T-cell (primary cell): ENCODE measurements at regions of chr2 and their contacts with region 1.

Region 1: DNA sequence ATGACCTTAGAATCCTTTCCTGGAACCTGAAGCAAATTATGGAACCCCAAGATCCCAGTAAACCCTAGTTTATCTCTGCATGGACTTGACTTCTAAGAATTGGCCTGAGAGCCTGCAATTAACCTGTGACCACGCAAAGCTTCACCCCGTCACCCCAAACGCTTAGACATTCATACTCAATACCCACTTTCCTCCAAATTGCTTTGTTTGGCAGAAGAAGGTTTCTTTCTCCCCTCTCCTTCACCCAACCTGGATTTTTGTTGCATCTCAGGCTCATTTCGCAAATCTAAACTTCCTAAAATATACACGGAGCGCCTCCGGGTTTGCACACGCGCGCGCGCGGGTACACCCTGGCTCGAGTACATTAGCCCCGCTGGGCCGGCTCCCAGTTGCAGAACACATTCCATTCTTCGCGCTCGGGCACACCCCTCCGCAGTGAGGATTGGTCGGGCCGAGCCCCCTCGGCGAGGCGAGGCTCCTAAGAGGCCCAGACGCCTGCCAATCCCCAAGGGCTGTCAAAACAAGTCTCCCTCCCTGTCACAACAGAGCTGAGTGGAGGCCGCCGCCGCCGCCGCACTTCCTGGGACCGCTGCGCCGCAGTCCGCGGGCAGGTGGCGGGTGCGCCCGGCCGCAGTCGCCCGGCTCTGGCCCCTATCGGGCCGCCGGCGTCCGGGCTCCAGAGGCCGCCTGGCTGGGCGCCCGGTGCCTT is at the start of gene PLCL1:
- DNase-seq: peak; percentile 82 to 94 (median 90)
- ATAC-seq: peak; percentile 97 to 99 (median 98)
- H3K4me3 ChIP-seq: peak within 1 kb of the TSS; percentile 82 to 86
- H3K4me3 Mint-ChIP-seq: peak within 1 kb of the TSS; percentile 87 to 91 (median 90)
- H3K27ac ChIP-seq: peak within 1 kb of the TSS; percentile 39
- H3K27ac Mint-ChIP-seq: peak within 1 kb of the TSS; percentile 88 to 89
- H3K4me1 ChIP-seq: peaks cover 18 to 20% of the 10 kb centered on the region in 2 experiments
- H3K4me1 Mint-ChIP-seq: peaks cover 46 to 50% (median 49%) of the 10 kb centered on the region in 3 donors
- H3K27me3 ChIP-seq: no peaks in the 10 kb centered on the region
- H3K27me3 Mint-ChIP-seq: peaks cover 0 to 4% of the 10 kb centered on the region in 2 donors
- total RNA-seq, gene PLCL1: 15.3 to 24.7 (median 20.3) TPM

Region 2: DNA sequence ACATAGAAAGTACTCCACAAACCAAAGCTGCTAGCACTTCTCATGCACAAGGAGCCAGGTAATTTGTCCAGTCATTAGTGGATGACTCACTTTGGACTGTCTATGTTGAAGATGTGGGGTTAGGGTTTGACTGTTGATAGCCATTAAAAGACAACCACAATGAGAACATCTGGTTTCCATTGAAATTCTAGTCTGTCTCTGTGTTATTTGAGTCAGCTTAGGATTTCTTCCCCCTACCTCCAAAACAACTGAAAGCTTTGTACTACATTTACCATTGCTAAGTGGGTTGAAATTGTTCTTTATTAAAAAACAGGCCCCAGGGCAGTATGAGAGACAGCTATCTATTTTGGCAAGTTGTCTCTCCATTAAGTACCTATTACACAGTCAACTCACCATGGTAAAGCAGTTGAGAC is 443.5 kb before region 1 on chr2:
- CTCF ChIA-PET with region 1: no interaction called
- POLR2A ChIA-PET with region 1: no interaction called
- DNase-seq: no peak
- ATAC-seq: no peak
- H3K4me3 ChIP-seq: no peak overlapping the region
- H3K4me3 Mint-ChIP-seq: no peak overlapping the region
- H3K27ac ChIP-seq: no peak overlapping the region
- H3K27ac Mint-ChIP-seq: no peak overlapping the region
- H3K4me1 ChIP-seq: peaks cover 3 to 4% of the 10 kb centered on the region in 2 experiments
- H3K4me1 Mint-ChIP-seq: peaks cover 23 to 25% (median 24%) of the 10 kb centered on the region in 3 donors
- H3K27me3 ChIP-seq: no peaks in the 10 kb centered on the region
- H3K27me3 Mint-ChIP-seq: no peaks in the 10 kb centered on the region

Region 3: GRCh38 chr2:197613509-197614042 is 190.6 kb before region 1 on chr2:
- CTCF ChIA-PET with region 1: no interaction called
- POLR2A ChIA-PET with region 1: interaction called in 1 of 2 experiments, 10 read pairs
- DNase-seq: no peak
- ATAC-seq: no peak
- H3K4me3 ChIP-seq: no peak overlapping the region
- H3K4me3 Mint-ChIP-seq: no peak overlapping the region
- H3K27ac ChIP-seq: no peak overlapping the region
- H3K27ac Mint-ChIP-seq: no peak overlapping the region
- H3K4me1 ChIP-seq: peaks cover 0 to 4% of the 10 kb centered on the region in 2 experiments
- H3K4me1 Mint-ChIP-seq: peaks cover 12 to 14% (median 13%) of the 10 kb centered on the region in 3 donors
- H3K27me3 ChIP-seq: peaks cover 0 to 5% of the 10 kb centered on the region in 2 experiments
- H3K27me3 Mint-ChIP-seq: no peaks in the 10 kb centered on the region

Region 4: GRCh38 chr2:197838036-197838435 is 33.8 kb after region 1 on chr2:
- CTCF ChIA-PET with region 1: interaction called in 1 of 2 experiments, 14 read pairs
- POLR2A ChIA-PET with region 1: interaction called, 3 to 4 read pairs
- DNase-seq: peak in 10 of 35 experiments; percentile 0 to 63 (median 8)
- ATAC-seq: peak; percentile 84 to 92 (median 86)
- H3K4me3 ChIP-seq: peak overlapping the region in 1 of 2 donors; percentile 17
- H3K4me3 Mint-ChIP-seq: peak overlapping the region; percentile 65 to 69 (median 65)
- H3K27ac ChIP-seq: peak overlapping the region; percentile 83
- H3K27ac Mint-ChIP-seq: peak overlapping the region; percentile 91 to 92
- H3K4me1 ChIP-seq: peaks cover 14 to 33% of the 10 kb centered on the region in 2 experiments
- H3K4me1 Mint-ChIP-seq: peaks cover 61 to 65% (median 64%) of the 10 kb centered on the region in 3 donors
- H3K27me3 ChIP-seq: no peaks in the 10 kb centered on the region
- H3K27me3 Mint-ChIP-seq: no peaks in the 10 kb centered on the region

Region 5: GRCh38 chr2:198127627-198128026 is 323.4 kb after region 1 on chr2:
- CTCF ChIA-PET with region 1: interaction called, 7 to 11 read pairs
- POLR2A ChIA-PET with region 1: no interaction called
- DNase-seq: peak in 34 of 35 experiments; percentile 2 to 72 (median 26)
- ATAC-seq: peak; percentile 48 to 59 (median 54)
- H3K4me3 ChIP-seq: no peak overlapping the region
- H3K4me3 Mint-ChIP-seq: no peak overlapping the region
- H3K27ac ChIP-seq: no peak overlapping the region
- H3K27ac Mint-ChIP-seq: no peak overlapping the region
- H3K4me1 ChIP-seq: peaks cover 0 to 4% of the 10 kb centered on the region in 2 experiments
- H3K4me1 Mint-ChIP-seq: peaks cover 0 to 7% (median 0%) of the 10 kb centered on the region in 3 donors
- H3K27me3 ChIP-seq: no peaks in the 10 kb centered on the region
- H3K27me3 Mint-ChIP-seq: no peaks in the 10 kb centered on the region

Region 6: GRCh38 chr2:198296665-198297308 is 492.6 kb after region 1 on chr2:
- CTCF ChIA-PET with region 1: interaction called, 4 to 12 read pairs
- POLR2A ChIA-PET with region 1: no interaction called
- DNase-seq: peak in 31 of 35 experiments; percentile 19 to 79 (median 44)
- ATAC-seq: peak; percentile 76 to 87 (median 80)
- H3K4me3 ChIP-seq: no peak overlapping the region
- H3K4me3 Mint-ChIP-seq: no peak overlapping the region
- H3K27ac ChIP-seq: no peak overlapping the region
- H3K27ac Mint-ChIP-seq: no peak overlapping the region
- H3K4me1 ChIP-seq: no peaks in the 10 kb centered on the region
- H3K4me1 Mint-ChIP-seq: peaks cover 0 to 4% (median 3%) of the 10 kb centered on the region in 3 donors
- H3K27me3 ChIP-seq: peaks cover 0 to 17% of the 10 kb centered on the region in 2 experiments
- H3K27me3 Mint-ChIP-seq: peaks cover 11 to 14% of the 10 kb centered on the region in 2 donors